ENCODE measurements at regions of chr1 and their contacts with region 1.

Region 1: DNA sequence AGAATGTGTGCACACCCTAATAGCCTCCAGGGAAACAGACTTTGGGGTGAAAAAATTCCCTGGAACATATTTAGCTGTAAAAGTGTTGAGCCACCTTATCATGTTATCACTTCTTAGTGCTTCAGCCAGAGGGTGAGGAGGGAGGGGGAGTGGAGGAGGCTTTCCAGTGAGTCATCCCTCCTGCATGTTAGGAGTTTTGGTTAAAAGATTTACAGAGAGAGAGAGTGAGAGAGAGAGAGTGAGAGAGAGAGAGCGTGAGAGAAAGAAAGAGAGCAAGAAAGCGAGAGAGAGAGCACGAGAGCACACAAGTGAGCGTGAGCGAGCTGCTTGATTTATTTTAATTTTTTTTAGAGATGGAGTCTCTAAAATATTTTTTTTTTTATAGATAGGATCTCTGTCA is 13.5 kb upstream of the CACNA1E start:
- DNase-seq: no peak
- H3K4me3 ChIP-seq: no peak overlapping the region
- H3K27ac ChIP-seq: no peak overlapping the region
- H3K4me1 ChIP-seq: no peaks in the 10 kb centered on the region
- H3K27me3 ChIP-seq: no peaks in the 10 kb centered on the region
- CTCF ChIP-seq: no peak
- POLR2A ChIP-seq: no peak

Region 2: GRCh38 chr1:182806015-182806678 is 1336.3 kb after region 1 on chr1:
- intact Hi-C with region 1: loop called (anchors 5 kb)
- DNase-seq: no peak
- H3K4me3 ChIP-seq: no peak overlapping the region
- H3K27ac ChIP-seq: no peak overlapping the region
- H3K4me1 ChIP-seq: no peaks in the 10 kb centered on the region
- H3K27me3 ChIP-seq: no peaks in the 10 kb centered on the region
- CTCF ChIP-seq: no peak
- POLR2A ChIP-seq: no peak